ENCODE measurements at regions of chr12 and their contacts with region 1.

Region 1: DNA sequence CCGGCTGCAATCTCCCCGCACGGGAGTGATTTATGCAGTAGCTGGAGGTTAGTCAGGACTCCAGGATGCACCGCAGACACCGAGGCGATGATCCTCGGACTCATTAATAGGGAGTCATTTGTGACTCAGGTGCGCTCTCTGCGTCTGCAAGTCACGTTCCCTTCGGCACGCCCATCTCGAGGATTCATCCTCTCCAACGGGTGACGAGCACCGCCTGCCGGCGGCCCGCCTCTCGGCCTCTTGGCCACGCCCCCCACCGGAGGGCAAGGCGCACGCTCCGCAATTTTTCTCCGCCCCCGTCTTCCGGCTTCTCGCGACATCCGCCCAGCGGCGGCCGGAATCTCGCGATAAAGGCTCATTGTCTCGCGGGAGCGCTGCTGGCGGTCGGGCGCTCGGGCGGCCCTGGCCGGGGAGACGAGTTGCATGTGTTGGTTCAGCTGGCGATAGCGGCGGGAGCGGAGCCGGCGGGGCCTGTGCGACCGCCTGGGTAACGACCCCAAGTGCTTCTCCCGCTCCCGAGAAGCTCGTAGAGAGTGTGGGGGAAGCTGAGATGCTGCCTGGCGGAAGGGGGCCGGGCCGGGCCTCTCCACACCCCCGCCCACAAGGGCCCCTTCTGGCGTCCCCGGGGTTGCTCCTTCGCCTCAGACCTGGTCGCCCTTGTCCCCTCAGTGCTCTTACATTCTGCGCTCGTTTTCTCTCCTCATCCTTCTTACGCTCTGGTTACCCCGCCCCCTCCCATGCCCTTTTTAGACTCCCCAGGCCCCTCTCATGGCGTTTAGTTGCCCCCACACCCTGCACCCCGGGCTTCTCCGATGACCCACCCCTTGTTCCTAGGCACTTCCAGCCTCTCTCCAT is at the start of gene DENR:
- DNase-seq: peak; percentile 94 to 99 (median 97)

Region 2: DNA sequence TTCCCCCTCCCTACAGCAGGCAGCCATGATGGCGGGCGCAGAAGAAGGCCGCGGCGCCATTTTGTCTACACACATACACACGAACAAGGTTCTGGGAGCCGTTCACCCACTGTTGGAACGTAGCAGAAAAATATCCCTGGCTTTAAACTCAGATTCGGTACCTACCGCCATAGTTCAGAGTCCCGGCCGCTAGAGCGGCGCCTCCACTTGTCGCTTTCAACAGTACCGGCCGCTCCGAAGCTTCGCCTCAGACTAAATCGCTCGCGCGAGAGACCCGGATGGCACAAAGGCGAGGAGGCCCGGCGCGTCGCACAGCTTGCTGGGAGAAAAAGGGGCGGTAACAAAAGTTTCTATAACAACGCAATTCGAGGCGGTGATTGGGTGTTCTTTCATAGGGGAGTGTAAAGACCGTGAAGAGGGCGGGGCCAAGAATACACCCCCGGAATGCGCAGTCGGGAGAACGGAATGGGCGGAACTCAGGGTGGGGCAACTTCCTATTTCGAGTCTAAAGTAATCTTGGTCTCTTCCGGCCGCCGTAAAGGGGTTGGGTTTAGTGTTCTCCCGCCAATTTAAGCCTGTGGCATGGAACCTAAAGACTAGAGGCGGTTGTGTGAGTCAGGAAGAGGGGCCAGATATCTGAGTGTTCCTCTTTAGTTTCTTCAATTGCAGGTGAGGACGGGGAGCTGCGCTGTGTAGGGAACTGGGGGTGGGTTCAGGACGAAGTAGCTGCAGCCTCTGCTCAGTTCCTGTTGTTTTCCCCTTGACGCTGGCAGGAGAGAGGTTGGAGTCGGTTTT is 225.8 kb before region 1 on chr12 and contains the starts of genes KNTC1 and RSRC2:
- intact Hi-C with region 1: loop called (anchors 5 kb)
- DNase-seq: peak; percentile 93 to 100 (median 98)

Region 3: DNA sequence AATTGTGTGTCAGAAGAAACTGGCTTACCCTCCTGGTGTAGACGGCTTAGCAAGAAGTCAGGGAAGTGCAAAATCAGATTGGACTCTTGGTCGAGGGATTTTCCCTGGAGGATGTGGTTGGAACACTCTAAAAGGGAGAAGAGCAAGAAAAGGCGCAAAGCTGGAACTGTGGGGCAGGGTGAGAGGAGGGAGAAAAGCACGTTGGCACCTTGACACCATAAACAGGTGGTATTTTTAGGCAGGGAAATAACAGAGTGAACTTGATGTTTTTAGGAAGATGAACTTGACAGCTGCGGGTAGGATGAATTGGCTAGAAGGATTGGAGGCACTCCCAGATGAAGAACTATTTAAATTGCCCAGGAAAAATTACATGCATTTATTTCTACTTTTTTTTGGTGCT is 117.2 kb before region 1 on chr12:
- intact Hi-C with region 1: loop called (anchors 5 kb)
- DNase-seq: peak in 10 of 42 donors; percentile 5 to 62 (median 21)

Region 4: GRCh38 chr12:122681814-122682213 is 70.9 kb before region 1 on chr12:
- intact Hi-C with region 1: no loop called
- DNase-seq: peak in 14 of 42 donors; percentile 4 to 47 (median 12)

Measured in head of caudate nucleus (tissue), 42 donors.